ENCODE measurements at regions of chr16 and their contacts with region 1.

Region 1: GRCh38 chr16:58733671-58734458 is at the start of gene GOT2:
- DNase-seq: peak; percentile 94
- total RNA-seq, gene GOT2: 429 TPM

Region 2: GRCh38 chr16:58086426-58087208 is 647.2 kb before region 1 on chr16:
- intact Hi-C with region 1: no loop called
- DNase-seq: peak; percentile 20

Region 3: GRCh38 chr16:58345574-58346354 is 388.1 kb before region 1 on chr16:
- intact Hi-C with region 1: loop called (anchors 10 kb)
- DNase-seq: no peak

Region 4: GRCh38 chr16:58684354-58685083 is 49.3 kb before region 1 on chr16 and contains the start of gene SLC38A7:
- intact Hi-C with region 1: loop called (anchors 1 kb)
- DNase-seq: peak; percentile 92
- total RNA-seq, gene SLC38A7: 26.9 TPM

Region 5: DNA sequence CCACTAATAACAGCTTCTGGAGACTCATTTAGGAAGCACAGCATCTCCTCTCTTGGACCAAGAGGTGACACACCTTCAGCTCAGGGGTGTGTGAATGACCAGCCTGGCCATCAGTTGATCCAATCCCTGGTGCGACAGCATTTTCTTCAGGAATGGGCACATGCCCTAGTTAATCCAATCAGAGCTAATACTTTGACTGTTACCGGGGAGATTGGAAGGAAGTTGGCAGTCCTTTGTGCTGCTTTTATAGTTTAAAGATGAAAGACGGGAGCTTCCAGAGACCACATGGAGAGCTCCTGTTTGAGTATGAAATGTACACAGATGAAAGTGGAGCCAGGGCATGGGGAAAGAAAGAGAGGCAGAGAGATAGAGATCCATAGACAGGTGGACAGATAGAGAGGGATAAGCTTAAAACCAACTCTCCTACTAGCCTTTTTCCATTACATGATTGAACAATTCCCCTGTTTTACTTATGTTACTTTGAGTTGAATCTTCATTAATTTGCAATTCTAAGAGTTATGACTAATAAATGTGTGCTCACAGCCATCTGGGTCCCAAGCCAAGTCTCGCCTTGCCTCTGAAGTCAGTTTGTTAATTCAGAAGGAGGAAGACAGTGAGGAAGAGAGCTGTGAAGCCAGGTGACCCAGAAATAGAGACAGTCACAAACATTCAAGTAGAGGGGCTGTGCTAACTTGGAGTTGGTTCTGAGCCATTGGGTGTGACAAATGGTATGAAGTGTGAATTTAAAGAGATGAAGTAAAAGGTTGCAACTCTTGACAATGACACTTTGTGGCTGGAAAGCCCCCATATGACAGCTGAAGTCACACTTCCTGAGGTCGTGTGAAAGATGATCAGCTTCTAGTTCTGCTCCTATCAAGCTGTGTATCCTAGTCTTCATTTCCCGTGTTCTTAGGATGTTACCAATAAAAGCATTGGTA is 120.3 kb after region 1 on chr16:
- intact Hi-C with region 1: no loop called
- DNase-seq: no peak